ENCODE measurements at regions of chr18 and their contacts with region 1.

Region 1: DNA sequence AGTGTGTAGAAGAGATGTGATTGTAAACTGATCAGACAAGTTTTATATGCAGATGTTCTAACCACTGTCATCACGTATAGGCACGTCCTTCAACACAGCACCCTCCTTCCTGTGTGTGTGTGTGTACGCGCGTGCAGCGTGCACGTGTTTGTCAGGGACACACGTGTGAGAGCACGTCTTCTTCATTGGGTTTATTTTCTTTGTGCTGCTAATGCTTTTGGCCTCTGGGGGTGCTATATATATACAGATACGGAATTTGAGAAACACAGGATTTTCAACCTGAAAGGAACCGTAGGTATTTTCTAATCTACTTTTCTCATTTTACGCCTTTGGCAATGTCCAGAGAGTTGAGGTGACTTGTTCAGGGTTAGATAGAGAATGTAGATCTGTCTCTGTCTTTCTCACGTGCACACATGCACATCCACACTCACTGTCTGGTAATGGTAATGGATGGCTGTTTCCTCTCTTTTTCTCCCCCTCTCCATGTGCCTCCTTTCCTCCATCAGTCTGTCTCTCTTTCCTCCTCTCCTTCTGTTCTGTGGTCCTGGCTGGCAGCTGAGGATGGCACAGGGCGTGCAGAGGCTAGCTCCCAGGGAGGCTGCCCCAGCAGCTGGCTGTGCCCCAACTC is 13.4 kb upstream of the CELF4 start:
- DNase-seq: no peak
- H3K4me3 ChIP-seq: 0 out of 8 replicates have a peak overlapping the region, but pooled peaks of 1 of the 4 experiments have one; percentile 8
- H3K27ac ChIP-seq: no peak overlapping the region
- H3K4me1 ChIP-seq: peaks cover 25 to 39% (median 31%) of the 10 kb centered on the region in 4 experiments
- H3K27me3 ChIP-seq: peaks cover 0 to 2% (median 0%) of the 10 kb centered on the region in 4 experiments; a peak in 3 of 7 replicates
- CTCF ChIP-seq: peak; percentile 1 to 37 (median 18); a peak in 3 of 4 replicates
- EP300 ChIP-seq: no peak
- POLR2A ChIP-seq: no peak
- RAD21 ChIP-seq: peak; percentile 22 to 31; a peak in 2 of 4 replicates

Region 2: DNA sequence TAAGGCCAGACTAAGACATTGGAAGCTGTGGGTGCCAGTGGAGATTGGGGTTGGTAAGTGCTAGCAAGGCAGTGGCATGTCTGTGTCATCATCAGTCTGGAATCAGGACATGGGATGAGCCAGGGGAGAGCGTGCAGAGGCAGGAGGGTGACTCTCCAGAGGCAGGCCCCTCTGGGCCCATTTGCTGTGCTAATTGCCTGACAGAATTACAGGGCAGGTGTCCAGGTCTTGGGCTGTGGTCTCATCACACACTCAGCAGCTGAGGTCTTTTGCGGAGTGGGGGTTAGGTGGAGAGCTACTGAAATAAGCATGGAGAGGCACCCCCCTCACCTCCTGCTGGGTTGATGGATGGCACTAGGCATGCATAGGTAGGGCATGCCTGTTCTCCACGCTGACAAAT is 70.8 kb before region 1 on chr18:
- CTCF ChIA-PET with region 1: no interaction called
- POLR2A ChIA-PET with region 1: no interaction called
- DNase-seq: no peak
- H3K4me3 ChIP-seq: no peak overlapping the region
- H3K27ac ChIP-seq: no peak overlapping the region
- H3K4me1 ChIP-seq: no peaks in the 10 kb centered on the region
- H3K27me3 ChIP-seq: no peaks in the 10 kb centered on the region
- CTCF ChIP-seq: no peak
- EP300 ChIP-seq: no peak
- POLR2A ChIP-seq: no peak
- RAD21 ChIP-seq: no peak

Region 3: DNA sequence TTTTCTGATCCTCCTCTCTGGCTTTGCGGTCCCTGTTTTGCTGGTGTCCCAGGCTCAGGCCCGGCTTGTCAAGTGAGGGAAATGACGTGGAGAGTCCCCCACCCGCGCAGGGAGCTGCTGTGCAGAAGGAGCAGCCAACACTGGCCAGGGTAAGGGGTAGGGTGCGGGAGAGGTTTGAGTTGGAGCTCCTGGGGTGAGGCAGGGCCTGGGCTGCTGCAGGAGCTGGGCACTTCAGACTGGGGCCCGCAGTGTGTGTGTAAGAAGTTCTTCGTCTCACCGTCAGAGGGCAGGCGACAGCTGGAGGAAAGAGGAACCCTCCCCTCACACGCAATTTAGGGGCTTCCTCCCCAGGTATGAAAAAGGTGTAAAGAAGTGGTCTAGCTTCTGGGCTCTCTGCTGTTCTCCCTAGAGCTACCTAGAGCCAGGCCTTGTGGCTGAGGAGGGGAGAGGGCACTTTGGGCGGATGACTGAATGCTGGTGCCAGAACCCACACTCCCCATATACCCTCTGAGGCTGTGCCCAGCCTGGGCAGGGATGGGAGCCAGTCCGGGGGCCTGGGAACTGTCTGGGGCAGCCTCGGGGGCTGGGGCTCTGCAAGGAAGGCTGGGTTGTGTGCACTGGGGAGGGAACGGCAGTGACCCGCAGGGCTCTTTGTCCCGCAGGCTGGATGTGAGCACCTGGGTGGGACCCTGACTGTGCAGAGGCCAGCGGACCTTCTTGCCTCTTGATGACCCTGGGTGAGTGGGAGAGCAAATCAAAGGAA is 25.2 kb before region 1 on chr18:
- CTCF ChIA-PET with region 1: interaction called, 10 read pairs
- POLR2A ChIA-PET with region 1: no interaction called
- DNase-seq: peak in 1 of 2 experiments; percentile 69
- H3K4me3 ChIP-seq: peak overlapping the region in 3 of 4 experiments; percentile 18 to 47 (median 29); a peak in 6 of 8 replicates
- H3K27ac ChIP-seq: no peak overlapping the region
- H3K4me1 ChIP-seq: peaks cover 5 to 13% (median 7%) of the 10 kb centered on the region in 4 experiments; a peak in 6 of 7 replicates
- H3K27me3 ChIP-seq: peaks cover 0 to 15% (median 11%) of the 10 kb centered on the region in 4 experiments; a peak in 6 of 7 replicates
- CTCF ChIP-seq: peak; percentile 69 to 80 (median 80)
- EP300 ChIP-seq: no peak
- POLR2A ChIP-seq: no peak
- RAD21 ChIP-seq: peak; percentile 73 to 74

Region 4: DNA sequence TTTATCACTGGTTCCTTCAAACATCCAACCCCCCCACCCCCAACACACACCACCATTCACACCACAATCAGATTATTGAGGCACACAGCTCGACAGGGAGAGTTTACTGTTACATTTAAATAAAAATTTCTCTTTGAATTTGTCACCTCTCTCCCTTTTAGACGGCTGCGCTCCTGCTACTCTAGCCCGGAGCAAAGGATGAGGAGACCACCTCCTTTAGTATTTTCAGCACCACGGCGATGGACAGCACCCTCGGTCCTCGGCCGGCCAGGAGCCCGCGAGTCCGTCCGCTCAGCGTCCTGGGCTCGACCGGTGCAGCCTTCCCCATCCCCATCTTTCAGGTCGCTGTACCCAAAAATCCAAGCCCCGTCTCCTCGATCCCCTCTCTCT is 14.3 kb before region 1 on chr18:
- CTCF ChIA-PET with region 1: interaction called, 5 read pairs
- POLR2A ChIA-PET with region 1: interaction called, 21 read pairs
- DNase-seq: peak in 1 of 2 experiments; percentile 92
- H3K4me3 ChIP-seq: peak overlapping the region; percentile 84 to 87 (median 86); a peak in 7 of 8 replicates
- H3K27ac ChIP-seq: no peak overlapping the region
- H3K4me1 ChIP-seq: peaks cover 0 to 7% (median 2%) of the 10 kb centered on the region in 4 experiments; a peak in 3 of 7 replicates
- H3K27me3 ChIP-seq: peaks cover 37 to 66% (median 59%) of the 10 kb centered on the region in 4 experiments
- CTCF ChIP-seq: no peak
- EP300 ChIP-seq: no peak
- POLR2A ChIP-seq: no peak
- RAD21 ChIP-seq: 0 out of 4 replicates have a peak, but pooled peaks of 1 of the 2 experiments have one; percentile 5

Region 5: GRCh38 chr18:37590346-37590745 is 11.3 kb after region 1 on chr18:
- CTCF ChIA-PET with region 1: interaction called, 24 read pairs
- POLR2A ChIA-PET with region 1: interaction called, 4 read pairs
- DNase-seq: no peak
- H3K4me3 ChIP-seq: no peak overlapping the region
- H3K27ac ChIP-seq: no peak overlapping the region
- H3K4me1 ChIP-seq: peaks cover 0 to 8% (median 4%) of the 10 kb centered on the region in 4 experiments; a peak in 3 of 7 replicates
- H3K27me3 ChIP-seq: peaks cover 0 to 2% (median under 1%) of the 10 kb centered on the region in 4 experiments; a peak in 3 of 7 replicates
- CTCF ChIP-seq: no peak
- EP300 ChIP-seq: no peak
- POLR2A ChIP-seq: no peak
- RAD21 ChIP-seq: no peak

Region 6: DNA sequence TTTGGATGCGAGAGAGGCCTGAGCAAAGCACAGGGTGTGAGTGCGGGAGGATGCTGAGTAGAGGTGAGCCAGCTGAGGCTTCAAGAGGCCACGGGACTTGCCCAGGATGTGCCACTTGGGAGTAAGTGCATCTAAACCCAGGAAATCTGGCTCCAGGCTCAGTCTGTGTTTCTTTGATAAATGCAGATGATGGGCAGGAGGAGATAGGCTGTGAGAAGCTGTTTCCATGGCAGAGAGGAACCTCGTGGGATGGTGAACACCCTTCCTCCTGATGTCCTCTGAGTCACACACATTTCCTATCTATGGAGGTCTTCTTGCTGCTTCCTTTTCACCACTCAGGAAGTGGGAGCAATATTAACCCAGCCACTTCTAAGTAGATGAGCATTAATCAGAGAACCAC is 25.0 kb after region 1 on chr18:
- CTCF ChIA-PET with region 1: no interaction called
- POLR2A ChIA-PET with region 1: no interaction called
- DNase-seq: peak in 1 of 2 experiments; percentile 7
- H3K4me3 ChIP-seq: no peak overlapping the region
- H3K27ac ChIP-seq: no peak overlapping the region
- H3K4me1 ChIP-seq: no peaks in the 10 kb centered on the region; a peak in 1 of 7 replicates
- H3K27me3 ChIP-seq: no peaks in the 10 kb centered on the region; a peak in 1 of 7 replicates
- CTCF ChIP-seq: no peak
- EP300 ChIP-seq: no peak
- POLR2A ChIP-seq: no peak
- RAD21 ChIP-seq: no peak

Region 7: GRCh38 chr18:37639846-37640245 is 60.8 kb after region 1 on chr18:
- CTCF ChIA-PET with region 1: interaction called, 14 read pairs
- POLR2A ChIA-PET with region 1: no interaction called
- DNase-seq: no peak
- H3K4me3 ChIP-seq: no peak overlapping the region
- H3K27ac ChIP-seq: no peak overlapping the region
- H3K4me1 ChIP-seq: peaks cover 2 to 7% (median 6%) of the 10 kb centered on the region in 4 experiments
- H3K27me3 ChIP-seq: peaks cover 0 to 3% (median 0%) of the 10 kb centered on the region in 4 experiments; a peak in 2 of 7 replicates
- CTCF ChIP-seq: no peak
- EP300 ChIP-seq: no peak
- POLR2A ChIP-seq: no peak
- RAD21 ChIP-seq: no peak

Region 8: GRCh38 chr18:37778417-37779165 is 199.6 kb after region 1 on chr18:
- CTCF ChIA-PET with region 1: interaction called, 10 read pairs
- POLR2A ChIA-PET with region 1: no interaction called
- DNase-seq: peak; percentile 84 to 97
- H3K4me3 ChIP-seq: peak overlapping the region in 1 of 4 experiments; percentile 19; a peak in 1 of 8 replicates
- H3K27ac ChIP-seq: no peak overlapping the region
- H3K4me1 ChIP-seq: no peaks in the 10 kb centered on the region
- H3K27me3 ChIP-seq: no peaks in the 10 kb centered on the region
- CTCF ChIP-seq: peak; percentile 92 to 97 (median 94)
- EP300 ChIP-seq: no peak
- POLR2A ChIP-seq: no peak
- RAD21 ChIP-seq: peak; percentile 94 to 97